Tibial artery (tissue), 4 donors: ENCODE measurements at regions of chr16 and their contacts with region 1.

Region 1: DNA sequence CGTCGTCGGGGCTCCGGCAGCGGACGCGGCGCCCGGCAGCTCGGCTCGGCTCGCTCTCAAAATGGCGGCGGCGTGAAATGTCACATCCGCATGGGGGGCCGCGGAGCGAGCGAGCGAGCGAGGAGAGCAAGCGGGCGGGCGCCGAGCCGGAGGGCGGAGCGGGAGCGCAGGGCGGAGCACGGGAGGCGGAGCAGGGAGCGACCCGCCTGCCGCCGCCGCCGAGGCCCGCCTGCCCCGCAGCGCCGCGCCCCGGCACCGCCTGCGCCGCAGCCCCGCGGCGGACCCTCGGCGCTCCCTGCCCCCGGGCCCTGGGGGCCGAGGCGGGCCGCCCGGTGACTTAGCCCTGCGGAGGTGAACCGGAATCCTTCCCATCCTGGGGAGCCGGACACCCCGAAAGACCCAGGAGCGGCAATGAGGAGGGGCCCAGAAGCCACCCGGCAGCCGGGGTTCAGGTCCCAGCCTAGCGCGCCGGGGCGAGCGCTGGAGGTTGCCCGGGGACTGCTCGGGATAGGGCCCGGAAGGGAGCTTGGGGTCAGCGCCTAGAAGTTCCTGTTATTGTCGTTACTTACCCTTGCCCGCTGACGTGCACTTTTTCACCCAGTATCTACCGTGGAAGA is at the start of gene USP7:
- DNase-seq: peak; percentile 94 to 95
- H3K4me3 ChIP-seq: peak within 1 kb of the TSS; percentile 80 to 81
- H3K27ac ChIP-seq: peak within 1 kb of the TSS; percentile 80 to 86
- H3K4me1 ChIP-seq: peaks cover 0 to 42% (median 36%) of the 10 kb centered on the region in 4 donors
- H3K27me3 ChIP-seq: no peaks in the 10 kb centered on the region
- CTCF ChIP-seq: no peak

Region 2: GRCh38 chr16:8806272-8806983 is 157.5 kb before region 1 on chr16:
- intact Hi-C with region 1: loop called (anchors 10 kb)
- DNase-seq: no peak
- H3K4me3 ChIP-seq: no peak overlapping the region
- H3K27ac ChIP-seq: no peak overlapping the region
- H3K4me1 ChIP-seq: peaks cover 0 to under 1% (median 0%) of the 10 kb centered on the region in 4 donors
- H3K27me3 ChIP-seq: no peaks in the 10 kb centered on the region
- CTCF ChIP-seq: no peak

Region 3: DNA sequence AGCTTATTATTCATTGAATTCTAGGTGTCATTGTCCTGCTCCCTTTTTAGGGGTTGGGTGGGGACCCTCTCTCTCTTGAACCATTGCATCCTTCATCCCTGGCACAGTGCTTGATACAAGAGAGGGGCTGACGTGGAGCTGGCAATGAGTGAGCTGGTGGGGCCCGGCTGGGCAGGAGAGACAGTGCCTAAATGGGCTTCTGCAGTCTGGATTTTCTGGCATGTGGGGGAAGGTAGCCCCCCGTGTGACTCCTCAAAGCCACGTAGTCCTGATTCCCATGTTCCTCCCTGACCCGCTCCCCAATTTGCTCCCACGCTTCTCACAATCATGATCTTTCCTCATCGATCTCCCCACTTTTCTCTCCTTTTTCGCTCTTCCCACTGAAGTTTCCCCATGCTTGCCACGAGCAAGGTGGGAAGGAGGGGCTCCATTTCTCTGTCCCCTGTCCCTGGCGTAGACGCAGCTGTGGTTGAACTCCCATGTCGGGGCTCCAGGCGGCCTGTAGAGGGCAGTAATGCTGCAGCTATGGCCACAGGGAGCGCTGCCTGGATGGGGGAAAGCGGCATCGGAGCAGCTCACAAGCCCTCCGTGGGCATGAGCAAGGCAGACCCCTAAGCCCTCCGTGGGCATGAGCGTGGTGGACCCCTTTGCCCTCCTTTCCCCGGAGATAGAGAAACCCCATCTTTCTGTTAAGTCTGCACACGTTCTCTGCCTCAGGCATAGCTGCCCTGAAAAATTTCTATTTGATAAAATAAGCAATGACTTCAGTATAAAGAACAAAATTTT is 175.0 kb after region 1 on chr16:
- intact Hi-C with region 1: no loop called
- DNase-seq: peak; percentile 62 to 76
- H3K4me3 ChIP-seq: no peak overlapping the region
- H3K27ac ChIP-seq: no peak overlapping the region
- H3K4me1 ChIP-seq: peaks cover 0 to 10% (median 3%) of the 10 kb centered on the region in 4 donors
- H3K27me3 ChIP-seq: no peaks in the 10 kb centered on the region
- CTCF ChIP-seq: peak; percentile 58 to 84